ENCODE measurements at regions of chr15 and their contacts with region 1.

Region 1: GRCh38 chr15:64731012-64731806 is 44.2 kb downstream of the RBPMS2 start:
- DNase-seq: peak; percentile 95 to 96
- H3K4me3 ChIP-seq: no peak overlapping the region
- H3K27ac ChIP-seq: peak overlapping the region in 1 of 3 donors; percentile 6
- H3K4me1 ChIP-seq: peaks cover 0 to 8% of the 10 kb centered on the region in 2 donors
- H3K27me3 ChIP-seq: no peaks in the 10 kb centered on the region
- CTCF ChIP-seq: peak; percentile 85 to 99 (median 95)
- POLR2A ChIP-seq: no peak

Region 2: GRCh38 chr15:64305261-64305660 is 425.9 kb before region 1 on chr15:
- intact Hi-C with region 1: no loop called
- DNase-seq: no peak
- H3K4me3 ChIP-seq: no peak overlapping the region
- H3K27ac ChIP-seq: no peak overlapping the region
- H3K4me1 ChIP-seq: peaks cover 0 to 5% of the 10 kb centered on the region in 2 donors
- H3K27me3 ChIP-seq: no peaks in the 10 kb centered on the region
- CTCF ChIP-seq: no peak
- POLR2A ChIP-seq: no peak

Region 3: GRCh38 chr15:64552281-64552948 is 178.8 kb before region 1 on chr15:
- intact Hi-C with region 1: no loop called
- DNase-seq: peak; percentile 71 to 75
- H3K4me3 ChIP-seq: no peak overlapping the region
- H3K27ac ChIP-seq: peak overlapping the region; percentile 31 to 52 (median 37)
- H3K4me1 ChIP-seq: peaks cover 0 to 18% of the 10 kb centered on the region in 2 donors
- H3K27me3 ChIP-seq: no peaks in the 10 kb centered on the region
- CTCF ChIP-seq: no peak
- POLR2A ChIP-seq: no peak

Region 4: GRCh38 chr15:64619880-64620839 is 111.0 kb before region 1 on chr15:
- intact Hi-C with region 1: no loop called
- DNase-seq: no peak
- H3K4me3 ChIP-seq: no peak overlapping the region
- H3K27ac ChIP-seq: peak overlapping the region in 1 of 3 donors; percentile 17
- H3K4me1 ChIP-seq: peaks cover 13 to 32% of the 10 kb centered on the region in 2 donors
- H3K27me3 ChIP-seq: no peaks in the 10 kb centered on the region
- CTCF ChIP-seq: no peak
- POLR2A ChIP-seq: no peak

Region 5: DNA sequence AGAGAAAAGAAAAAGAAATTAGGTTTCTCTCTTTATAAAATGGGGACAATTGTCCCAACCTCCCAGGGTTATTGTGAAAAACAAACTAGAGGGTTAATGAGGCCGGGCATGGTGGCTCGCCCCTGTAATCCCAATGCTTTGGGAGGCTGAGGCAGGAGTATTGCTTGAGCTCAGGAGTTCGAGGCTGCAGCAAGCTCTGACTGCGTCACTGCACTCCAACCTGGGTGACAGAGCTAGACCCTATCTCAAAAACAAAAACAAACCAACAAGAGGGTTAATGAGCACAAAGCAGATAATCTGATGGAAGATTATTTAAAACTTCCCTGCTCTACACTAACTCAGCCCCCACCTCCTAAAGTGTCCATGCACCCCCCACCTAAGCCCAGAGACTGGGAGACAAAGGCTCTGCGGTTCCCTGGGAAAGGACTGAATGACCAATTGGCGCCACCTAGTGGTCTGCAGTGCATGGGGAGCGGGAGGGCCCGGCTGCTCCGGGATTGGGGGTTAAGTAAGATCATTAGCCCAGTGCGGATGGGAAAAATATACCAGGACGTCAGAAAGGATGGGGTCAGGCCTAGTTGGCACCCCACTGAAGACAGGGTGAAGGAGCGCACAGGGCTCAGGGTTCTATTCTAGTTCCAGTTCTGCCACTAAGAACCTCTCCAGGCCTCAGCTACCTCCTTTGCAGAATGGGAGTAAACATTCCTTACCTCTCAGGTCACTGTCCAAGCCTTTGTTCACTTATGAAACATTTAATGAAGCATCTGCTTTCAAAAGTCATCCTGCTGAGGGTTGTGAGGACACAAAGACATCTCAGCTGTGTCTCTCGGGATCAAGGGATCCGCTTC is 78.7 kb after region 1 on chr15:
- intact Hi-C with region 1: loop called (anchors 2 kb)
- DNase-seq: peak; percentile 77 to 85
- H3K4me3 ChIP-seq: no peak overlapping the region
- H3K27ac ChIP-seq: no peak overlapping the region
- H3K4me1 ChIP-seq: no peaks in the 10 kb centered on the region
- H3K27me3 ChIP-seq: no peaks in the 10 kb centered on the region
- CTCF ChIP-seq: peak; percentile 66 to 94 (median 90)
- POLR2A ChIP-seq: no peak

Region 6: DNA sequence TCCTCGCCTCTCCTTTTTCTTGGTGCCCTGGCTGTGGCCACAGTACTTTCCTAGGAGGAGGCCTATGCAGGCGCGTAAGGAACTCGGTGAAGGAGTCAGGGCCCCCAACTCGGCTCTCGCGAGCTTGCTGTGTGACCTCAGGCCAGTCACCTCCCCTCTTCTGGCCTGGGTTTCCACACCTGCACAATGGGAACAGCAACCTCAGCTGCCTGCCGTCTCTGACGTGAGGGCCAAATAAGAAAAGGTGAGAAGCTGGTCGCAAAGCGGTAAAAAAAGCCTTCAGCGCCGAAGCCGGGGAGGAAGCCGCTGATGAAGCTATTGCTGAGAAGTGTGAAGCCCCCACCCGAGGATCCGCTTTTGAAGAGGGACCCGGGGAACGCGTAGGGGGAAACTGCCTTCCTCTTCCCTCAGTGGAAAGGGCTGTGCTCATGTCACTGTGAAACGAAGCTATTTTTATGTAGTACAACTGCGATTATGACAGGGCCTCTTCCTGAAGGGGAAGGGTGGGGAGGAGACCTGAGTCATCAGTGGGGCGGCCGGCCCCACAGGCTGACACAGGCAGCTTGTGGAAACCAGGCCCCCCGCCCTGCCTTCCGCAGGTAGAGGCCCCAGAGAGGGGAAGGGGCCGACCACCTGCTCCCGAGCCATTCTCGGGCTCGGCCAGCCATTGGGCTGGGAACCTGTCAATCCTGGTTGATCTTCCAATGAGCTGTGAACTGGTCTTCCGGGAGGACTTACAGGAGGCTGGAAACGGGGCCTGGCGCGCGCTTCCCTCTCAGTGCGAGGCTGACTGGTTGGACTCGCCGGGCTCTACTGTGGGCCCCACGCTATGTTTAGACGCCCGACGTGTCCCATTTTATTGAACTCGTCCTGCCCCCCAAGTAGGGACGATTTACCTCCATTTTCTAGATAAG is 162.5 kb after region 1 on chr15:
- intact Hi-C with region 1: loop called (anchors 10 kb)
- DNase-seq: peak; percentile 91 to 94
- H3K4me3 ChIP-seq: no peak overlapping the region
- H3K27ac ChIP-seq: peak overlapping the region; percentile 67 to 82 (median 77)
- H3K4me1 ChIP-seq: peaks cover 20 to 50% of the 10 kb centered on the region in 2 donors
- H3K27me3 ChIP-seq: no peaks in the 10 kb centered on the region
- CTCF ChIP-seq: no peak
- POLR2A ChIP-seq: peak in 1 of 2 donors; percentile 67

Measured in thyroid gland (tissue), 4 donors.